Adrenal gland (tissue), 19 donors: ENCODE measurements at regions of chr13 and their contacts with region 1.

Region 1: GRCh38 chr13:35978603-35979316 is 152.4 kb downstream of the DCLK1 start:
- DNase-seq: peak in 6 of 7 donors; percentile 18 to 60 (median 46)
- H3K4me3 ChIP-seq: no peak overlapping the region
- H3K27ac ChIP-seq: peak overlapping the region in 3 of 5 donors; percentile 25 to 72 (median 49)
- H3K4me1 ChIP-seq: peaks cover 0 to 9% of the 10 kb centered on the region in 2 donors
- H3K27me3 ChIP-seq: no peaks in the 10 kb centered on the region
- CTCF ChIP-seq: peak; percentile 74 to 95 (median 87)
- POLR2A ChIP-seq: no peak

Region 2: DNA sequence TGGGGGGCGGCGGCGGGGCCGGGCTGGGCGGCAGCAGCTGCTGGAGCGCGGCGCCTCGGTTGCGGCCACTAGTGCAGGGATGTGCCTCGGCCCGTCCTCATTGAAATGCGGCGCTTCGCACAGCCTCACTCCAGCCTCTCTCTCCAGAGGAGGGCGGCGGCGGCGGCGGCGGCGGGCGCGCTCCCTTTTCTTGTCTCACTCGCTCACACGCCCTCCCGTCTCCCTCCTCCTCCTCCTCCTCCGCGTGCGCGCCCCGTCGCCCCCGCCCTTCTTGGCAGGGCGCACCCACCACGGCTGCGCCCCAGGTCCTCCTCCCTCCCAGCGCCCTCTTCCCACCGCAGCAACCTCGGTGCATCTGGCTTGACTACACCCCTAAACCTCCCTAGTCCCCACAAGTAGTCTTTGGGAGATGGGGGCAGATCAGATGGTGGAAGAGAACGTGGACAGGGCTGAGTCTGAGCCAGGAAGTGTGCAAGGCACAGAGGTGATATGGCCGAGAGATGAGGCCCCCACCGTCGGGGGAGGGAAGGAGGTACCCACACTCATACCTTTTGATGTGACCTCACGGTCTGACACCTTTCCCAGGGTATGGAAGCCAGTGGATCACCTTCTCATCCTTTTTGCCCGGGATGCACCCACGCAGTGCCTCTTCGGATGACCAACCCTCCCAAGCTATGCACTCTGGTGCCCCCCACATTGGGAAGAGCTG is 152.6 kb after region 1 on chr13 and contains the start of gene DCLK1:
- intact Hi-C with region 1: no loop called
- DNase-seq: peak in 3 of 7 donors; percentile 23 to 32 (median 25)
- H3K4me3 ChIP-seq: peak within 1 kb of the TSS in 1 of 4 donors; percentile 55
- H3K27ac ChIP-seq: no peak within 1 kb of the TSS
- H3K4me1 ChIP-seq: no peaks in the 10 kb centered on the region
- H3K27me3 ChIP-seq: peaks cover 11% of the 10 kb centered on the region
- CTCF ChIP-seq: no peak
- POLR2A ChIP-seq: no peak
- total RNA-seq, gene DCLK1: 0.68 to 22.6 (median 2.0) TPM

Region 3: GRCh38 chr13:36275190-36276002 is 296.6 kb after region 1 on chr13:
- intact Hi-C with region 1: loop called (anchors 2 to 5 kb)
- DNase-seq: peak in 5 of 7 donors; percentile 17 to 62 (median 35)
- H3K4me3 ChIP-seq: no peak overlapping the region
- H3K27ac ChIP-seq: no peak overlapping the region
- H3K4me1 ChIP-seq: no peaks in the 10 kb centered on the region
- H3K27me3 ChIP-seq: no peaks in the 10 kb centered on the region
- CTCF ChIP-seq: peak; percentile 44 to 69 (median 62)
- POLR2A ChIP-seq: no peak